Ovary (tissue), 10 donors: ENCODE measurements at regions of chrX and their contacts with region 1.

Region 1: DNA sequence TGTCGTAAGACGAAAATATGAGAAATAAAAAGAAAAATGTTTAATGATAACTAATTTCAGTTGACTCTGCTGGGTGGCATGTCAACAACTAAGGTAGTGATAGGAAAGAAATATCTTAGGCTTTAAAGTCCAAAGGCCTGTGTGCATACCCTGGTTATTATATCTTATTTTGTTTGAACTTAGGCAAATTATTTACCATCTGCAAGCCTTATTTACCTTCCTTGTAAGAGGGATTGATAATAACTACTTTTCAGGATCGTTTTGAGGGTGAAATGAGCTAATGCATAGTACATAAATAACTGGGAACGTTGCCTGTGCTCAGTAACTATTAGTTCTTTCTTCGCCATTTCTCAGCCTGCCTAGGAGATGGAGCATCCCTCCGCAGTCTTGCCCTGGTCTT is 41.6 kb upstream of the TAB3 start:
- DNase-seq: no peak
- H3K4me3 ChIP-seq: no peak overlapping the region
- H3K27ac ChIP-seq: no peak overlapping the region
- H3K4me1 ChIP-seq: no peaks in the 10 kb centered on the region
- H3K27me3 ChIP-seq: no peaks in the 10 kb centered on the region
- CTCF ChIP-seq: no peak
- EP300 ChIP-seq: no peak
- POLR2A ChIP-seq: no peak

Region 2: GRCh38 chrX:30910124-30910860 is 20.4 kb before region 1 on chrX:
- intact Hi-C with region 1: loop called in 1 of 4 experiments (anchors 1 kb)
- DNase-seq: no peak
- H3K4me3 ChIP-seq: no peak overlapping the region
- H3K27ac ChIP-seq: no peak overlapping the region
- H3K4me1 ChIP-seq: no peaks in the 10 kb centered on the region
- H3K27me3 ChIP-seq: no peaks in the 10 kb centered on the region
- CTCF ChIP-seq: no peak
- EP300 ChIP-seq: no peak
- POLR2A ChIP-seq: no peak

Region 3: DNA sequence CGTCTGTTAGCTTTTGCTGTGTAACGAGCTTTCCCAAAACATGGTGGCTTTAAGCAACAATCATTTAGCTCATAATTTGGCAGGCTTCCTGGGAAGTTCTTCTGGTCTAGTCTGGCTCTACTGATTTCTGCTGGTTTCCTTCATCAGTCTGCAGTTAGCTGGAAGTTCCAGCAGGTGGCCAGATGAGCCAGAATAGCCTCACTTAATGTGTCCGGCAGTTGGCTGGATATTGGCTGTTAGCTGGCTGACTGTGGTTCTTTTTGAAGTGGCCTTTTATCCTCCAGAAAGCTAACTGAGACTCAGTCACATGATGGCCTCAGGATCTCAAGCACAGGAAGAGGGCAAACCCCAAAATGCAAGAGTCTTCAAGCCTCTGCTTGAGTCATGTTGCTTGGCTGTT is 106.2 kb after region 1 on chrX:
- intact Hi-C with region 1: no loop called
- DNase-seq: peak in 4 of 5 donors; percentile 16 to 35 (median 23)
- H3K4me3 ChIP-seq: no peak overlapping the region
- H3K27ac ChIP-seq: no peak overlapping the region
- H3K4me1 ChIP-seq: no peaks in the 10 kb centered on the region
- H3K27me3 ChIP-seq: no peaks in the 10 kb centered on the region
- CTCF ChIP-seq: peak in 1 of 3 donors; percentile 23
- EP300 ChIP-seq: no peak
- POLR2A ChIP-seq: no peak